ENCODE measurements at regions of chr10 and their contacts with region 1.

Region 1: GRCh38 chr10:71893920-71894319 is 42.9 kb upstream of the PSAP start:
- DNase-seq: no peak
- H3K4me3 Mint-ChIP-seq: no peak overlapping the region
- H3K27ac Mint-ChIP-seq: no peak overlapping the region
- H3K4me1 Mint-ChIP-seq: peaks cover 4% of the 10 kb centered on the region
- H3K27me3 Mint-ChIP-seq: peaks cover 15% of the 10 kb centered on the region

Region 2: GRCh38 chr10:71812016-71812912 is 81.7 kb before region 1 on chr10:
- intact Hi-C with region 1: no loop called
- DNase-seq: peak; percentile 55
- H3K4me3 Mint-ChIP-seq: no peak overlapping the region
- H3K27ac Mint-ChIP-seq: no peak overlapping the region
- H3K4me1 Mint-ChIP-seq: no peaks in the 10 kb centered on the region
- H3K27me3 Mint-ChIP-seq: no peaks in the 10 kb centered on the region

Region 3: DNA sequence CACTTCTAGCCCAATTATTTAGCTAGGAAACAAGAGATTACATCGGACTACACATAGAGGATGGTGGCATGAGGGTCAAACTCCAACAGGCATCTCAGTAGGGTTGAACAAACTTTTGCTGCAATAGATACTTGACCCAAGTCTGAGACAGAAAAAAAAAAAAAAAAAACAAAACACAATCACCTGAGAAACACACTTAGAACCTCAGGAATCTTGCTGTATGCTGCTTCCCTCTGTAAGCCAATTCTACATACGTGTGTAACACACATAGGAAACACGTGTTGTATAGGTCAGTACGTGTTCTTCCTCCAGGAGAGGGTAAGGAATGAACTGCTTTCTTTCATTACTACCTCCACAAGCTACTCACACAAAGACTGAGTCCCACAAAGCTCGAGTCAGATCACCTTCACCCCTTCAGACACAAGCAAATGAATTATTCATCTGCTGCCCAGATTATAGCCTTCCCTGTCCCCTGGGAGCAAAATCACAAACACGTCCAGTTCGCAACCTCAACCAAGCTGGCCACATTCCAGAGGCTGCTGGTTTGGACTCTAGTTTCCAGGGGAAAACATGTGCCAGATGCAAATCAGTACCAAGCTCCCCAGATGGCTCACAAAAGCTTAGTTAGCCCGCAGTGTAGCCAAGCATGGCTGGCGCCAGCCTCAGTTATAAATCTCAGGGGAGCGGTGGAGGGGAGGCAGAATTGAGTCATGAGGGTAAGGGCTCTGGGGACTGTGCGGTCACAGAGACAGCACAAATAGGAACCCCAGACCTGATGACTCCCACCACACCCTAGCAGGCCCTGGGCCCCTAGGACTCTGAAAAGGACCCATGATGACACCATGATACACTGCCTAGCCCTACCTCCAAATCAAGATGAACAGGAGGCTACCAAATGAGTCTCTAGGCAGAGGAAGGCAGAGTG is 58.0 kb before region 1 on chr10:
- intact Hi-C with region 1: loop called (anchors 2 kb)
- DNase-seq: no peak
- H3K4me3 Mint-ChIP-seq: no peak overlapping the region
- H3K27ac Mint-ChIP-seq: no peak overlapping the region
- H3K4me1 Mint-ChIP-seq: peaks cover 19% of the 10 kb centered on the region
- H3K27me3 Mint-ChIP-seq: no peaks in the 10 kb centered on the region

Region 4: DNA sequence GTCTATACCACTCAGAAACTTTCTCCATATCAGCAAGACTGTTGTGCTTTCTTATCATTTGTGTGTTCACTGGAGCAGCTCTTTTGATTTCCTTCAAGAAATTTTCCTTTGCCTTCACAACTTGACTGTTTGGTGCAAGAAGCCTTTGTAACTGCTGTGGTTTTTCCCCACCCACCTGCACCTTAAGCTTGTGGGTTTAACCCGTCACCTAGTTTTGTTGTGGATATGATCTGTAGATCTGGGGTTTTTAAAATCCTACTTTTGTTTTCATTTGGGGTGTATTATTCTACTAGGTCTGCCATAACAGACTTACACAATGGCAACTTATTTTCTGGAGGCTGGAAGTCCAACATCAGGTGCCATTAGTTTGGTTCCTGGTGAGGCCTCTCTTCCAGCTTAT is 39.7 kb after region 1 on chr10:
- intact Hi-C with region 1: loop called (anchors 2 kb)
- DNase-seq: peak; percentile 32
- H3K4me3 Mint-ChIP-seq: no peak overlapping the region
- H3K27ac Mint-ChIP-seq: peak overlapping the region; percentile 73
- H3K4me1 Mint-ChIP-seq: peaks cover 11% of the 10 kb centered on the region
- H3K27me3 Mint-ChIP-seq: peaks cover 3% of the 10 kb centered on the region

Region 5: DNA sequence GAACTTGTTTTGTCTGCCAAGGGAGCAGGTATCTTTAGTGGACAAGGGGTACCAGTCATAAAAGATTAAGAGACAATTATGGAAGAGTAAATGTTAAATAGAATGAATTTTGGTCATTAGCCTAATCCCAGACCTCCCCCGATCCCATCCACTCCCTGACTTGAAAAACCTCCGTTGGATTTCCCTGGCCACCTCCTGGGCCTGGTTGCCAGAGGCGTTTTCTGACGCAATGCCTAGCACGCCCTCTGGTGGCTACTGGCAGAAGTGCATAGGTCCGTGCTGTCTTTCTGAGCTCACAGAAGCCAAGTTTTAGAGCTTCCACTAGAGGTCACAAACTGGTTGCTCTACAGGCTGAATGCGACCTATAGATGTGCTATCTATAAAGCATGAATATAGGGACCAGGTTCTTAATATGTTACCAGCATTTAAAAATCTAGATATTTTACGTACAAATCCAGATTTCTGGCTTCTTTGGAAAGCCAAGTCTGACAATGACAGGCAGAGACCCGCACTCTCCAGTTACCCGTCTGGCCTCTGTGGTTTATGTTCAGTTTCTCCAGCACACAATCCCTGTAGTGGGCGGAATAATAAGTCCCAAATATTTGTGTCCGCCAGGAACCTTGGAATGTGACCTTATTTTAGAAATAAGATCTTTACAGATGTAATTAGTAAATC is 154.7 kb after region 1 on chr10:
- intact Hi-C with region 1: loop called (anchors 1 kb)
- DNase-seq: peak; percentile 79
- H3K4me3 Mint-ChIP-seq: no peak overlapping the region
- H3K27ac Mint-ChIP-seq: peak overlapping the region; percentile 7
- H3K4me1 Mint-ChIP-seq: peaks cover 18% of the 10 kb centered on the region
- H3K27me3 Mint-ChIP-seq: no peaks in the 10 kb centered on the region

Measured in activated T-helper 2 cell treated with anti-CD3 and anti-CD28 coated beads, Interferon-gamma antibody, Interleukin-2, Interleukin-4, amounts not matched to agents 10 μg/mL and 5 μg/mL and 100 μg/mL, durations not matched to agents 14 hours and 24 hours and 36 hours (primary cell).